ENCODE measurements at regions of chr3 and their contacts with region 1.

Region 1: GRCh38 chr3:20185701-20186598 is at the start of gene SGO1:
- DNase-seq: peak; percentile 99
- H3K4me3 Mint-ChIP-seq: no peak within 1 kb of the TSS
- H3K27ac Mint-ChIP-seq: no peak within 1 kb of the TSS
- H3K4me1 Mint-ChIP-seq: peaks cover 7% of the 10 kb centered on the region
- H3K27me3 Mint-ChIP-seq: peaks cover 4% of the 10 kb centered on the region
- total RNA-seq, gene SGO1: 19.2 and 20.8 TPM in 2 replicates

Region 2: GRCh38 chr3:19937459-19938294 is 248.3 kb before region 1 on chr3:
- intact Hi-C with region 1: loop called (anchors 1 kb)
- DNase-seq: no peak
- H3K4me3 Mint-ChIP-seq: no peak overlapping the region
- H3K27ac Mint-ChIP-seq: peak overlapping the region; percentile 84
- H3K4me1 Mint-ChIP-seq: peaks cover 39% of the 10 kb centered on the region
- H3K27me3 Mint-ChIP-seq: peaks cover 6% of the 10 kb centered on the region

Region 3: GRCh38 chr3:20039766-20040475 is 146.0 kb before region 1 on chr3 and contains the start of gene KAT2B:
- intact Hi-C with region 1: loop called (anchors 1 kb)
- DNase-seq: peak; percentile 77
- H3K4me3 Mint-ChIP-seq: peak within 1 kb of the TSS; percentile 95
- H3K27ac Mint-ChIP-seq: peak within 1 kb of the TSS; percentile 91
- H3K4me1 Mint-ChIP-seq: peaks cover 45% of the 10 kb centered on the region
- H3K27me3 Mint-ChIP-seq: peaks cover 5% of the 10 kb centered on the region
- total RNA-seq, gene KAT2B: 10.9 and 12.1 TPM in 2 replicates

Region 4: GRCh38 chr3:20104167-20104661 is 81.7 kb before region 1 on chr3:
- intact Hi-C with region 1: loop called (anchors 1 kb)
- DNase-seq: peak; percentile 40
- H3K4me3 Mint-ChIP-seq: no peak overlapping the region
- H3K27ac Mint-ChIP-seq: peak overlapping the region; percentile 16
- H3K4me1 Mint-ChIP-seq: peaks cover 59% of the 10 kb centered on the region
- H3K27me3 Mint-ChIP-seq: no peaks in the 10 kb centered on the region

Region 5: GRCh38 chr3:20391644-20392043 is 205.7 kb after region 1 on chr3:
- intact Hi-C with region 1: no loop called
- DNase-seq: no peak
- H3K4me3 Mint-ChIP-seq: no peak overlapping the region
- H3K27ac Mint-ChIP-seq: no peak overlapping the region
- H3K4me1 Mint-ChIP-seq: no peaks in the 10 kb centered on the region
- H3K27me3 Mint-ChIP-seq: no peaks in the 10 kb centered on the region